AG04449 (cell line): ENCODE measurements at regions of chr5 and their contacts with region 1.

Region 1: DNA sequence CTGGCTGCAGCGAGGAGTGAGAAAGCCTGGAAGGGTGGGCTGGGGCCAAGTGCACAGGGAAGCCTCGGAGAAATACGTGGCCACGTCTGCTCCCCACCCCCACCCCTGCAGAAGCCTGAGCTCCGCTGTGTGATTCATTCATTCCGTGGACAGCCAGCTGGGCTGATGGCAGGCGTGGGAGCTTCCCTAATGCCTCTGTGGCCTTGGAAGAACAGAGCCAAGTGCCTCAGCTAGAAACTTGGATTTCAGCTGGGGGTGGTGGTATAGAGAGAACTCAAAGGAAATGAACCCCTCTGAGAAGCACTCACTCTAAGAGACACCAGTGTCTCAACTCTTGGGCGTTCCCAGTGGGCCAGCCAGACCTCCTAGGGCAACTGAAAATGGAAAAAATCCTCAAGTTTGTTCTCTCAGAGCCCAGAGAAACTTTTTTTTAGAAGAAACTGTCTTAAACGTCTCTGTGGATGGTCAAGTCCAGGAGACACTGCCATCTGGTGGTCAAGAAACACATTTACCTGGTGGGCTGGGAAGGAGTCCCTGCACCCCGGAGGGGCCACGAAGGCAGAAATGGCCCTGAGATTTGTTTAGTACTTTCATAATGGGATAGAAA is 18.0 kb downstream of the ATOX1 start:
- DNase-seq: peak; percentile 88
- H3K4me3 ChIP-seq: peak overlapping the region; percentile 39
- CTCF ChIP-seq: peak; percentile 57

Region 2: DNA sequence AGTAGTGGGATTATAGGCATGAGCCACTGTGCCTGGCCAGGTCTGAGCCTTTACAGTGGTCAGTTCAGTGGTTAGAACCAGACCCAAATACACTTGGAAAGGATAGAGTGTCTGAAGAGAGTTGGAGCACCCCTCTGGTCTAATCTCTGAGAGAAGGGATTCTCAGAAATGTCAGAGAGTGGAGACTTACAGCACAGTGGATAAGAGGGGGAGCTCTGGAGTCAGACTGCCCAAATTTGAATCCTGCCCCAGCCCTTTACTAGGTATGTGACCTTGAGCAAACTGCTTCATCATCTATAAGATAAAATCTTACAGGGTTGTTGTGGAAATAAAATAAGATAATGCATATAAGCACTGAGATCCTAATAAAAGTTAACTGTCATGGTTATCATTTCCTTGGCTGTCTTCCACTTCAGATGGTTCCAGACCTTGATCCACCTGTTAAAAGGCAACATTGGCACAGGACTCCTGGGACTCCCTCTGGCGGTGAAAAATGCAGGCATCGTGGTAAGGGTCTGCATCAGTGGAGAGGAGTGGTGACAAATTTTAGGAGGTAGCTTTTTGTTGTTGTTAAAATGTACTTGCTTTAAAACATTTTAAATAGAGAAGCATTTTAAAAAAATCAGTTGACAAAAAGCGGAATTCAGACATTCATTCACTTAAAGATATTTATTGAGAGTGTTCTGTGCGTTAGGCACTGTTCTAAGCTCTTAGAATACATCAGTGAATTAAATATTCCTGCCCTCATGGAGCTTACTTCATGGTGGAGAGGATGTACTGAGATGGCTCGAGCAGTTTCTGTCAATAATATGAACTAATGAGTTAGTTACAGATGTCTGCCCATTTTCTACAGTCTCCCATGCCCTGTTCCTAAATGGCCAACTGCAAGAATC is 277.1 kb before region 1 on chr5:
- CTCF ChIA-PET with region 1: interaction called, 19 read pairs
- POLR2A ChIA-PET with region 1: no interaction called
- DNase-seq: no peak
- H3K4me3 ChIP-seq: no peak overlapping the region
- CTCF ChIP-seq: peak; percentile 14

Region 3: GRCh38 chr5:151659001-151659754 is 81.3 kb before region 1 on chr5:
- CTCF ChIA-PET with region 1: interaction called, 652 read pairs
- POLR2A ChIA-PET with region 1: interaction called, 193 read pairs
- DNase-seq: no peak
- H3K4me3 ChIP-seq: no peak overlapping the region
- CTCF ChIP-seq: peak; percentile 88

Region 4: GRCh38 chr5:151692320-151692719 is 48.1 kb before region 1 on chr5:
- CTCF ChIA-PET with region 1: interaction called, 16 read pairs
- POLR2A ChIA-PET with region 1: interaction called, 156 read pairs
- DNase-seq: no peak
- H3K4me3 ChIP-seq: no peak overlapping the region
- CTCF ChIP-seq: no peak

Region 5: GRCh38 chr5:151719228-151720000 is 21.0 kb before region 1 on chr5:
- CTCF ChIA-PET with region 1: interaction called, 153 read pairs
- POLR2A ChIA-PET with region 1: interaction called, 62 read pairs
- DNase-seq: no peak
- H3K4me3 ChIP-seq: no peak overlapping the region
- CTCF ChIP-seq: peak; percentile 45

Region 6: DNA sequence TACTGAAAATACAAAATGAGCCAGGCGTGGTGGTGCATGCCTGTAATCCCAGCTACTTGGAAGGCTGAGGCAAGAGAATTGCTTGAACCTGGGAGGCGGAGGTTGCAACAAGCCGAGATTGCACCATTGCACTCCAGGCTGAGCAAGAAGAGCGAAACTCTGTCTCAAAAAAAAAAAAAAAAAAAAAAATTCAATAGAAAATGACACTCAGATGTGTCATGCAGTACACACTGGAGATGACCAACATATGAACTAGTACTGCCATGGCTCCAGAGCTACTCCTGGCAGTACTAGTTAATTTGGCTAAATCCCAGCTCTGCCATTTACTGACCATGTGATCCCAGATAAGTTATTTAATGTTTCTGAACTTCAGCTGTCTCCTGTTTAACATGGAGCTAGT is 10.7 kb after region 1 on chr5:
- CTCF ChIA-PET with region 1: interaction called, 24 read pairs
- POLR2A ChIA-PET with region 1: interaction called, 3 read pairs
- DNase-seq: no peak
- H3K4me3 ChIP-seq: no peak overlapping the region
- CTCF ChIP-seq: no peak

Region 7: GRCh38 chr5:151847871-151848270 is 107.4 kb after region 1 on chr5:
- CTCF ChIA-PET with region 1: no interaction called
- POLR2A ChIA-PET with region 1: no interaction called
- DNase-seq: no peak
- H3K4me3 ChIP-seq: no peak overlapping the region
- CTCF ChIP-seq: no peak